B cell (primary cell): ENCODE measurements at regions of chr11 and their contacts with region 1.

Region 1: DNA sequence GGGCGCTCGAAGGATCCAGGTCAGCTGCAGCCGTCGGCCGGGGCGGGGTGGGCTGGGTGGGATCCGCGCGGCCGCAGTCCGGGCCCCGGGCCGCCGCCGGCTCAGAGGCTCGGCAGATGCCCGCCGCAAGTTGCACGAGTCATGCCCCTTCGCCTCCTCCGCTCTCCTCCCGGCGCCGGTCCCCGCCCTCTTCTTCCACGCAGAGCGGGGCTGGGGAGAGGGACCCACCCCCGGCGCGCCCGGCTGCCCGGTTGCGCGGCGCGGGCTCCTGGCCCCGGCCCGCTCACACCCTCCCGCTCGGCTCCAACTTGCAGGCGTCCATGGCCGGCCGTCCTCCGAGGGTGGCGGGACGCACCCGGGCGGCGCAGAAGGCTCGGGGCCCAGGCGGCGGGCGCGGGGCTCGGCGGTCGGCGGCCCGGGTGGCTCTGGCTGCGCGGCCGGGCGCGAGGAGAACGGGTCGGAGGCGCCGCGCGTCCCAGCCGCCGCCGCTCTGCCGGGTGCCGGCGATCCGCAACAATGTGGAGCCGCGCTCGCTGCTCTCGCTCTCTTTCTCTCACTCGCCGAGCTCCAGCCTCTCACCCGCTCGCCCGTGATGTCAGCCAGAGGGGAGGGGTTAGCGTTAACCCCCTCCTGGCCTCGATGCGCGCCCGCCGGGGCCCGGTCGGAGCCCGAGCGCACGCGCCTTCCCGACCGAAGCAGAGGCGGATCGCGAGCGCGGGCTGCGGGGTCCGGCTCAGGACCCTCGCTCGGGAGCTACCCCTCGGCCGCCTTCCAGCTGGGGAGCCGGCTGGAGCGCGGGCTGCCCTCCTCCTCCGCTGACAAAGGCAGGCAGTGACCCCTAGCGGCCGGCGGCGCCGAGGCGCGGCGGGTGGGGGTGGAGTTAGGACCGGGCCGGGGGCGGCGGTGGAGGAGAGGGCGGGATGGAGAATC is at the start of gene NECTIN1:
- DNase-seq: peak; percentile 93
- ATAC-seq: peak; percentile 88
- H3K4me3 ChIP-seq: peak within 1 kb of the TSS; percentile 44 to 72 (median 63)
- H3K4me3 Mint-ChIP-seq: peak within 1 kb of the TSS; percentile 96
- H3K27ac ChIP-seq: no peak within 1 kb of the TSS
- H3K27ac Mint-ChIP-seq: peak within 1 kb of the TSS; percentile 84
- H3K4me1 ChIP-seq: peaks cover 34 to 39% of the 10 kb centered on the region in 2 donors
- H3K4me1 Mint-ChIP-seq: peaks cover 32% of the 10 kb centered on the region
- H3K27me3 ChIP-seq: peaks cover 0 to 48% (median 17%) of the 10 kb centered on the region in 4 experiments
- H3K27me3 Mint-ChIP-seq: peaks cover 23% of the 10 kb centered on the region
- CTCF ChIP-seq: peak; percentile 97
- total RNA-seq, gene NECTIN1: 3.9 and 5.5 TPM in 2 replicates

Region 2: DNA sequence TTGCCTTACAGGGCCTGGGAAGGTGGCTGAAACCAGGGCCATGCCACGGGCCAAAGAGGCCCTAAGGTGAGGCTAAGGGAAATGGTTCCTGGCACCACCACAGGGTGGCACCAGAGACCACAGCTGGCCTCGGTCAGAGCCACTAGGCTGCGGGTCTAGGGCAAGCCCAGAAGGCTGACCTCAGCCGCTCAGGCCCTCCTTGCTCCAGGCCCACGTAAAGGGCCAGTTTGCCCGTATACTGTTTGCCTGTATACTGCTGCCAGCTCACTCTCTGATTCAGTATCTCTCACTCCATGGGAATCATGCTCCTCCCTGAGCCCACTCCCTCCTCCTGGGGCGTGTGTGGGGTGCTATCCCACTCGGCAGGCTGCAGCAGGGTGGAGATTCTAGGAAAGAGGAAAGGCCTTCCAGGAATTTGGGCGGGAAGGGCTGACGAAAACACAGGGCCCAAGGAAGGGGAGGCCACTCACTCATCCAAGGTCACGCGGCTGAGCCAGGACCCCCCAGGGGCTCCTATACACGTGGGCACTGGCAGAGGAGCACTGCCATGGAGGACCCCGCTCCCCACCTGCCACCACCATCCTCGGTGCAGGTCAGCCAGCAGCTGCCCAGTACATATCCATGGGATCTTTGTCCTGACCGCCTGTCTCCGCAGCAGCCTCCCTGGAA is 62.3 kb before region 1 on chr11:
- CTCF ChIA-PET with region 1: interaction called, 5 read pairs
- POLR2A ChIA-PET with region 1: no interaction called
- intact Hi-C with region 1: loop called (anchors 1 kb)
- DNase-seq: peak; percentile 64
- ATAC-seq: peak; percentile 81
- H3K4me3 ChIP-seq: no peak overlapping the region
- H3K4me3 Mint-ChIP-seq: no peak overlapping the region
- H3K27ac ChIP-seq: no peak overlapping the region
- H3K27ac Mint-ChIP-seq: no peak overlapping the region
- H3K4me1 ChIP-seq: no peaks in the 10 kb centered on the region
- H3K4me1 Mint-ChIP-seq: no peaks in the 10 kb centered on the region
- H3K27me3 ChIP-seq: no peaks in the 10 kb centered on the region
- H3K27me3 Mint-ChIP-seq: no peaks in the 10 kb centered on the region
- CTCF ChIP-seq: peak; percentile 76

Region 3: DNA sequence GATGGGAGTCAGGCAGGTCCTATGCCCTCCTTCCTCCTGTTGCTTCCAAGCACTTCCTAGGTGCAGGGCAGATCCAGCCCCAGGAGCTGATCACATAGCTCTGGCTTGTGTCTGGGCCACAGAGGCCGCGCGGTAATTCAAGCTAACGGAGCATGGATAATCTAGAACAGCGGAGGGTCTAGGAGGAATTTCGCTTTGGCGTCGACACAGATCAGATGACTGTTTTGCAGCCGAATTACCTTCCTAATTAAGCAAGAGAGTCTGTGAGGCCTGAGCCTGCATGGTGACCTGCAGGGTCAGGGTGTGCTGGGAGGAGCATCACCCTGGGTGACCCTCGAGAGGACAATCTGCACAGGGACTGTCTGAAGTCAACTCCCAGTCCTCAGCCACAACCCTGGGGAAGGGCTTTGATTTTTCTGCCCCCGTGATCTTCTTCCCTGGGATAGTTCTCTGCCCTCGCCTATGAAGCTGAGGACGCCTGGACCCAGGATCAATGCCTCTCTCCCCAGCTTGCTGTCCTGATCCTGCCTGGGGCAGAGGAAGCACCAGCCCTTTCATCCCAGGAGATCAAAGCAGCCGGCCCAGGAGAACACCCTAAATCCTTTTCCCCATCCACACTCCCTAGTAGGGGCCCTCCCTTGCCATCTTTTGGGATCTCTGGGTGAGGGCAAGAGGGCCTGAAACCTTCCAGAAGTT is 10.9 kb before region 1 on chr11:
- CTCF ChIA-PET with region 1: interaction called, 11 read pairs
- POLR2A ChIA-PET with region 1: no interaction called
- intact Hi-C with region 1: no loop called
- DNase-seq: no peak
- ATAC-seq: no peak
- H3K4me3 ChIP-seq: no peak overlapping the region
- H3K4me3 Mint-ChIP-seq: no peak overlapping the region
- H3K27ac ChIP-seq: no peak overlapping the region
- H3K27ac Mint-ChIP-seq: no peak overlapping the region
- H3K4me1 ChIP-seq: no peaks in the 10 kb centered on the region
- H3K4me1 Mint-ChIP-seq: peaks cover 2% of the 10 kb centered on the region
- H3K27me3 ChIP-seq: no peaks in the 10 kb centered on the region
- H3K27me3 Mint-ChIP-seq: peaks cover 13% of the 10 kb centered on the region
- CTCF ChIP-seq: no peak

Region 4: GRCh38 chr11:119752345-119752871 is 23.5 kb after region 1 on chr11:
- CTCF ChIA-PET with region 1: interaction called, 37 read pairs
- POLR2A ChIA-PET with region 1: no interaction called
- intact Hi-C with region 1: loop called (anchors 1 kb)
- DNase-seq: peak; percentile 65
- ATAC-seq: peak; percentile 61
- H3K4me3 ChIP-seq: no peak overlapping the region
- H3K4me3 Mint-ChIP-seq: peak overlapping the region; percentile 81
- H3K27ac ChIP-seq: no peak overlapping the region
- H3K27ac Mint-ChIP-seq: peak overlapping the region; percentile 76
- H3K4me1 ChIP-seq: peaks cover 30 to 32% of the 10 kb centered on the region in 2 donors
- H3K4me1 Mint-ChIP-seq: peaks cover 28% of the 10 kb centered on the region
- H3K27me3 ChIP-seq: peaks cover 0 to 3% (median 0%) of the 10 kb centered on the region in 4 experiments
- H3K27me3 Mint-ChIP-seq: peaks cover 14% of the 10 kb centered on the region
- CTCF ChIP-seq: no peak

Region 5: GRCh38 chr11:120335908-120336640 is 607.2 kb after region 1 on chr11 and contains the start of gene ARHGEF12:
- CTCF ChIA-PET with region 1: interaction called, 3 read pairs
- POLR2A ChIA-PET with region 1: no interaction called
- intact Hi-C with region 1: loop called (anchors 5 kb)
- DNase-seq: peak; percentile 91
- ATAC-seq: peak; percentile 70
- H3K4me3 ChIP-seq: peak within 1 kb of the TSS; percentile 42 to 77 (median 75)
- H3K4me3 Mint-ChIP-seq: peak within 1 kb of the TSS; percentile 93
- H3K27ac ChIP-seq: peak within 1 kb of the TSS; percentile 44 to 56
- H3K27ac Mint-ChIP-seq: peak within 1 kb of the TSS; percentile 91
- H3K4me1 ChIP-seq: peaks cover 22 to 35% of the 10 kb centered on the region in 2 donors
- H3K4me1 Mint-ChIP-seq: peaks cover 35% of the 10 kb centered on the region
- H3K27me3 ChIP-seq: peaks cover 0 to 46% (median 35%) of the 10 kb centered on the region in 4 experiments
- H3K27me3 Mint-ChIP-seq: peaks cover 46% of the 10 kb centered on the region
- CTCF ChIP-seq: no peak
- total RNA-seq, gene ARHGEF12: 21.6 and 23.8 TPM in 2 replicates

Region 6: GRCh38 chr11:120612513-120613263 is 883.8 kb after region 1 on chr11:
- CTCF ChIA-PET with region 1: no interaction called
- POLR2A ChIA-PET with region 1: no interaction called
- intact Hi-C with region 1: no loop called
- DNase-seq: no peak
- ATAC-seq: no peak
- H3K4me3 ChIP-seq: no peak overlapping the region
- H3K4me3 Mint-ChIP-seq: no peak overlapping the region
- H3K27ac ChIP-seq: no peak overlapping the region
- H3K27ac Mint-ChIP-seq: no peak overlapping the region
- H3K4me1 ChIP-seq: peaks cover 0 to 11% of the 10 kb centered on the region in 2 donors
- H3K4me1 Mint-ChIP-seq: peaks cover 16% of the 10 kb centered on the region
- H3K27me3 ChIP-seq: peaks cover 0 to 3% (median 0%) of the 10 kb centered on the region in 4 experiments
- H3K27me3 Mint-ChIP-seq: peaks cover 5% of the 10 kb centered on the region
- CTCF ChIP-seq: no peak